ENCODE measurements at regions of chr17 and their contacts with region 1.

Region 1: DNA sequence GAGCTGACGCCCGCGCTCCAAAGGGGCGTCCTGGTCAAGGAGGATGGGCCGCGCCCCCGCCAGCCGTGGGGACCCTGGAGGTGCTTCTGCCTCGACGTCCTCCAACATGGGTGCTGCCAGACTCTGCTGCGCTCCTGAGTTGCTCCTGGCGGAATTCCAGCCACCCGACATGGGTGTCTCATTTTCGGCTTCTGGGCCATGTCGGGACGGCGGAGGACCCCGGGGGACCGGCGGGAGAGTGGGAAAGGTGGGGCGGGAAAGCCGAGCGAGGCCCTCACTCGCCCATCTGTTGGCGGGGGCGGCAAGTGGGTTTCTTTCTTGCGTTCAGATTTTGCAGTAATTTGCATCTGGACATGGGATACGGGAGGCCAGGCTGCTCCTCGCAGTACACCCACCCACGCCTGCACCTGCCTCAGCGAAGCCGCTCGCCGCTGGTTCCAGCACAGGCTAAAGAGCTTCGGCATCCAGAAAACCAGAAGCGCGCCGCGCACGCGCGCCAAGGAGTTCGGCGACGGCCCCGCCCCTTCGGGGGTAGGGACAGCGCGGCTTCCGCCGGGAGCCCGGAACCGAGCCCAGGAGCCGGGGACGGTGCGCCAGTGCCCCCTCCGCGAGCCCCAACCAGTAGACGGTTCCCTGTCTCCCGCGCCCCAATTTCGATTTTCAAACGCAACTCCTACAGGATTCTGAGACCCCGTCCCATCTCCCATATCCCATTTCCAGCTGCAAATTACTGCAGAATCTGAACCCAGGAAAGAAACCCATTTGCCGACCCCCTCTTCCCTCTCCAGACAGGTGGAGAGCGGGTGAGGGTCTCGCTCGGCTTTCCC is at the start of gene ARMC7:
- DNase-seq: peak; percentile 91
- H3K4me3 ChIP-seq: peak within 1 kb of the TSS; percentile 80
- H3K27ac ChIP-seq: peak within 1 kb of the TSS; percentile 86
- H3K4me1 ChIP-seq: peaks cover 48% of the 10 kb centered on the region
- H3K27me3 ChIP-seq: no peaks in the 10 kb centered on the region
- CTCF ChIP-seq: no peak
- total RNA-seq, gene ARMC7: 6.2 TPM

Region 2: GRCh38 chr17:75173526-75173925 is 63.9 kb after region 1 on chr17:
- intact Hi-C with region 1: loop called (anchors 5 kb)
- DNase-seq: peak; percentile 1
- H3K4me3 ChIP-seq: no peak overlapping the region
- H3K27ac ChIP-seq: no peak overlapping the region
- H3K4me1 ChIP-seq: peaks cover 27% of the 10 kb centered on the region
- H3K27me3 ChIP-seq: no peaks in the 10 kb centered on the region
- CTCF ChIP-seq: no peak

Region 3: GRCh38 chr17:75250009-75250471 is 140.4 kb after region 1 on chr17:
- intact Hi-C with region 1: no loop called
- DNase-seq: no peak
- H3K4me3 ChIP-seq: peak overlapping the region; percentile 48
- H3K27ac ChIP-seq: peak overlapping the region; percentile 69
- H3K4me1 ChIP-seq: peaks cover 22% of the 10 kb centered on the region
- H3K27me3 ChIP-seq: no peaks in the 10 kb centered on the region
- CTCF ChIP-seq: no peak

Measured in left ventricle myocardium inferior (tissue), 1 donor.